Esophagus squamous epithelium (tissue), 5 donors: ENCODE measurements at regions of chr15 and their contacts with region 1.

Region 1: DNA sequence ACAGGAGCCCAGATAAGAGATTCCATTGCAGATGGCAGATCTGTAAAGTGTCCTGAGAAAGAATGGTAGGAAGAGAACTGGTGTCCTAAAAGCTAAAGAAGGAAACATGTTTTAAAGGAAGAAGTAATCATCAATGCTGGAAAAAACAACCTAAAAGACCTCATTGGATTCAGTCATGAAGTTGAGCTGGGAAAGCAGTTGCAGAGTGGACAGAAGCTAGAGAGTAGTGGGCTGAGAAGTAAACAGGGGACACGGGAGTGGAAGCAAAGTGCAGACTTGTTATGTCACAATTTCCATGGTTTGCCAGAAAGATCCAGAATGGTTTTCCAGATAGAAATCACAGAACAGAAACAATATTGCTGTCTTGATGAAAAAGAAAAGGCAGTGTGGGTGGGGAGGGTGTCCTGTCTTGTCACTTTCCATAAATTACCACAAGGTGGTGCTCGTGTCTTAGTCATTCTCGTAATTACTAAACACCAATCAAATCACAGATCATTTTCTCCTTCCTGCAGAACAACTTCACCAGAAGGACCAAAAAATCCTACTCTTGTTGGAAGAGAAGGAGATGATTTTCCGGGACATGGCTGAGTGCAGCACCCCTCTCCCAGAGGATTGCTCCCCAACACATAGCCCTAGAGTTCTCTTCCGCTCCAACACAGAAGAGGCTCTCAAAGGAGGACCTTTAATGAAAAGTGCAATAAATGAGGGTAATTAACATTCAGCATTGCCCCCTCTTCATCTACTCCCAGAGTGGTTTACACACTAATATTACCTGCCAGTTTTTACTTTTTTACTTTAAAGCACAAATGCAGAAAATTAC is 64.5 kb downstream of the KLHL25 start:
- DNase-seq: no peak
- H3K4me3 ChIP-seq: no peak overlapping the region
- H3K27ac ChIP-seq: peak overlapping the region in 3 of 4 donors; percentile 26 to 84 (median 83)
- H3K4me1 ChIP-seq: peaks cover 0 to 28% (median 21%) of the 10 kb centered on the region in 3 donors
- H3K27me3 ChIP-seq: no peaks in the 10 kb centered on the region
- CTCF ChIP-seq: peak; percentile 65 to 85 (median 76)
- POLR2A ChIP-seq: no peak

Region 2: DNA sequence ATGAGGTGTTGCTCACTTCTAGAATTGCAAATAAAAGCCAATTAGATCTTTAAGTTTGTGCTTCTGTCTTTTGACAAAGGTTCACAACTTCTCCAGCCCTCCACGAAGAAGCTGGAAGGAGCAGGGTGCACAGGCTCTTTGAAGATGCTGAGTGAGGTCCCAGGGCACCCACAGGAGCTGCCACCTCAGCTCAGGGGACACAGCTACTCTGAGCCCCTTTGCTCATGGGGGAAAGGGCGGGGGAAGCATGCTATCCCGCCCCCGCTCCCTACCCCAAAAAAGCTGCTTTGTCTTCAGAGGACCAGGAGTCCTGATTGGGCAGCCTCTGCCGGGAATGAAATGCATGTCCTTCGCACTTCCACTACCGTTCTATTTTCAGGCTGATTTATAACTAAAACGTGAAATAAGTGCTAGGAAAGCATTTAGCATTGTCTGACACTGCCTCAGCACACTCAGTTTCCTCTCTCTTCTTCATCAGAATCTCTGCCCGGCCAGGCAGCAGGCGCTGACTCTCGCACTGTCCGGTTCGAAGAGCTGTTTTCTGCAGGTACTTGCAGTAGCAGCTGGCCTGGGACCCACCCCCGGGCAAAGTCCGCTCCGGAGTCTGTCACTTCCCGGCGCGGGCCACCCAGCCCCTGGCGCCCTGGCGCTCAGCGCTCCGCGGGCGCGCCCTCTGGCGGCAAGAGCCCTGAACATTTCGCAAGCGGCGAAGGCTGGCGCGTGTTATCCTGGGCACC is 110.0 kb after region 1 on chr15:
- intact Hi-C with region 1: loop called (anchors 5 kb)
- DNase-seq: no peak
- H3K4me3 ChIP-seq: peak overlapping the region in 3 of 4 donors; percentile 1 to 59 (median 29)
- H3K27ac ChIP-seq: no peak overlapping the region
- H3K4me1 ChIP-seq: peaks cover 3 to 17% (median 5%) of the 10 kb centered on the region in 3 donors
- H3K27me3 ChIP-seq: peaks cover 0 to 19% (median 0%) of the 10 kb centered on the region in 4 donors
- CTCF ChIP-seq: peak; percentile 84 to 94 (median 90)
- POLR2A ChIP-seq: no peak